Activated CD4-positive, alpha-beta T cell treated with anti-CD3 and anti-CD28 coated beads, Interleukin-2, amount 10 ng/mL, durations not matched to agents 7 days and 5 days (primary cell): ENCODE measurements at regions of chr6 and their contacts with region 1.

Region 1: GRCh38 chr6:41538556-41539182 is 7.5 kb upstream of the FOXP4 start:
- DNase-seq: no peak
- H3K4me3 Mint-ChIP-seq: no peak overlapping the region
- H3K27ac Mint-ChIP-seq: no peak overlapping the region
- H3K4me1 Mint-ChIP-seq: peaks cover 7% of the 10 kb centered on the region
- H3K27me3 Mint-ChIP-seq: peaks cover 63% of the 10 kb centered on the region

Region 2: GRCh38 chr6:41527721-41528590 is 10.7 kb before region 1 on chr6:
- CTCF ChIA-PET with region 1: interaction called, 10 read pairs
- POLR2A ChIA-PET with region 1: no interaction called
- DNase-seq: no peak
- H3K4me3 Mint-ChIP-seq: no peak overlapping the region
- H3K27ac Mint-ChIP-seq: no peak overlapping the region
- H3K4me1 Mint-ChIP-seq: peaks cover 20% of the 10 kb centered on the region
- H3K27me3 Mint-ChIP-seq: peaks cover 43% of the 10 kb centered on the region